Activated CD4-positive, alpha-beta memory T cell treated with anti-CD3 and anti-CD28 coated beads for 36 hours (primary cell): ENCODE measurements at regions of chr15 and their contacts with region 1.

Region 1: DNA sequence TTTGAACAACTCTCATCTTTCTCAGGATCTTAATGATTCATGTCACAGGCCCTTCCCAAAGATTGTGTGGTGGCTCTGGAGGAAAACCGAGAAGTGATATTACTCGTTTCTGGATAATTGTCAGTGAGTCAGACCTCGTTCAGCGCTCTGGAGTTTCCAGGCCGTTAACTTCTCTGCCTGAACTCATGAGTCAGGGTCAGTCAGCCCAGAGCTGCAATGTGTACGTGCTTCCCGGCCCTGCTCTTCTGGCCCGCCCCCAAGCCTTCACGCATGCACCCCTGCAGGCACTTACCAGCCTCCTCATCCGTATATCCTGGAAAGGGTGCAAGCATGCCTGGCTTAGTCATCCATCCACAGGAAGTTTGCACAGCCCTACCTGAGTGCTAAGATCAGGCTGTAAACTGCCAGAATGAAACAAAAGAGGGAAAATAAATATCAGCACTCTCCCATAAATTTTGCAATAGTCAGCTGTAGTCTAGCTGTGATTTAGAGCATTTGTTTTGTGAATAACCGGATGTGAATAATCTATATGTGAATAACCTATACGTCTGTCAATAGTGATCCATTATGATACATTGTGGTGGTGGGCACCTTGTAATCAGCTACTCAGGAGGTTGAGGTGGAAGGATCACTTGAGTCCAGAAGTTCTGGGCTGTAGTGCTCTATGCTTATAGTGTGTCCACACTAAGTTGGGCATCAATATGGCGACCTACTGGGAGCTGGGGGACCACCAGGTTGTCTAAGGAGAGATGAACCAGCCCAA is 35.3 kb upstream of the SEMA4B start:
- DNase-seq: peak; percentile 80
- H3K4me3 Mint-ChIP-seq: no peak overlapping the region
- H3K27ac Mint-ChIP-seq: peak overlapping the region; percentile 66
- H3K4me1 Mint-ChIP-seq: peaks cover 17% of the 10 kb centered on the region
- H3K27me3 Mint-ChIP-seq: no peaks in the 10 kb centered on the region

Region 2: DNA sequence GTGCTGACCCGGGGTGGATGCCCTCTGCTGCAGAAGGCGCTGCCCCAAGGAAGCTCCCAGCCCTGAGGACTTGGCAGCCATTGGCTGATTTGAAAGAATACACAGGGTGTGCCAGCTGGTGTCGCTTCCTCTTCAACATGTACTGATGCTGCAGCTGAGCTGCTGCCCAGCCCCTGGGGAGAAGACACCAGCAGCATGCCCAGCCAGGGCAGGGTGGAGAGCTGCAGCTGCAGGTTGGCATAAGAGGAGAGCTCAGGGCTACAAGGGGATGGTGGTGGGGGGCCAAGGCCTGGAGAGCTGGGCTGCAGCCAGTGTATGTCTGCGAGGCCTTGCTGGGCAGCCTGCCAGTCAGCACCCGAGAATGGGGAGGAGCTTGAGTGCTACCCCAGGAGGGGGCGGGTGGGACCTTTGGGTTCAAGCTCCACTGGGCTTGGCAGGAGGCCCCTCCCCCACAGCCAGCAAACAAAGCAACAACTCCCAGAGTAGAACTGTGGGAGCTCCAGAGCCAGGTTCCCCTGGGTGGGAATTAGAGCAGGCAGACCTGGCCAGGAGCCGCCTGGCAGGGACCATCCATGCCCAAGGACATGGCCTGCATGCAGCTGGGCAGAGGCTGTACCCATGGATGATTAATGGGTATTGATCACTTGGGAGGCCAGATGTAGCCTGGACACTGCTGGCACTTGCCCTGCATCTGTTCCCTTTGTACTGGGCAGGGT is 26.1 kb after region 1 on chr15:
- CTCF ChIA-PET with region 1: no interaction called
- POLR2A ChIA-PET with region 1: no interaction called
- intact Hi-C with region 1: no loop called
- DNase-seq: peak; percentile 56
- H3K4me3 Mint-ChIP-seq: no peak overlapping the region
- H3K27ac Mint-ChIP-seq: peak overlapping the region; percentile 38
- H3K4me1 Mint-ChIP-seq: peaks cover 18% of the 10 kb centered on the region
- H3K27me3 Mint-ChIP-seq: no peaks in the 10 kb centered on the region

Region 3: GRCh38 chr15:90209591-90209990 is 43.8 kb after region 1 on chr15:
- CTCF ChIA-PET with region 1: no interaction called
- POLR2A ChIA-PET with region 1: no interaction called
- intact Hi-C with region 1: loop called (anchors 2 kb)
- DNase-seq: peak; percentile 86
- H3K4me3 Mint-ChIP-seq: peak overlapping the region; percentile 28
- H3K27ac Mint-ChIP-seq: peak overlapping the region; percentile 83
- H3K4me1 Mint-ChIP-seq: peaks cover 35% of the 10 kb centered on the region
- H3K27me3 Mint-ChIP-seq: no peaks in the 10 kb centered on the region